CD8-positive, alpha-beta memory T cell (primary cell): ENCODE measurements at regions of chr16 and their contacts with region 1.

Region 1: GRCh38 chr16:70454222-70455034 is at the start of gene FCSK:
- DNase-seq: peak; percentile 52 to 88 (median 74)
- H3K4me3 ChIP-seq: peak within 1 kb of the TSS; percentile 99
- H3K4me3 Mint-ChIP-seq: peak within 1 kb of the TSS; percentile 86 to 96 (median 93)
- H3K27ac ChIP-seq: peak within 1 kb of the TSS; percentile 83
- H3K27ac Mint-ChIP-seq: peak within 1 kb of the TSS; percentile 78 to 93 (median 91)
- H3K4me1 ChIP-seq: peaks cover 12% of the 10 kb centered on the region
- H3K4me1 Mint-ChIP-seq: peaks cover 15 to 34% (median 25%) of the 10 kb centered on the region in 3 donors
- H3K27me3 ChIP-seq: no peaks in the 10 kb centered on the region
- H3K27me3 Mint-ChIP-seq: no peaks in the 10 kb centered on the region
- total RNA-seq, gene FCSK: 15.1 to 16.9 TPM

Region 2: DNA sequence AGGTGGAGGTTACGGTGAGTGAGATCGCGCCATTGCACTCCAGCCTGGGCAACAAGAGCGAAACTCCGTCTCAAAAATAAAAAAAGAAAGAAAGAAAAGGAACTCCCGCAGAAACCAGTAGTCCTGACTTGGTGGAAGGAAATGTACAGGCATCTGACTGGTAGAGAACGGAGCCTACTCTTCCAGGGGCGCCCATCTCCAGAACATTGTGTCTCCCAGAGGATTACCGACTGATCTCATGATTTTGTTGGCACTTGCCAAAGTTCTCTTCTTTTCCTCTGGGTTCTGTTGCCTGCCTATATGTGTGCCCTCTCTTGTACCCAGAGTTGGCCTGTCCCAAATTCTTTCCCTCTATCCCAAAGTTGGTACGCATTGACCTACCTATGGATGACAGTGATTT is 83.5 kb before region 1 on chr16:
- CTCF ChIA-PET with region 1: interaction called, 10 read pairs
- POLR2A ChIA-PET with region 1: interaction called, 4 read pairs
- DNase-seq: no peak
- H3K4me3 ChIP-seq: no peak overlapping the region
- H3K4me3 Mint-ChIP-seq: no peak overlapping the region
- H3K27ac ChIP-seq: no peak overlapping the region
- H3K27ac Mint-ChIP-seq: peak overlapping the region in 4 of 8 donors; percentile 29 to 77 (median 51)
- H3K4me1 ChIP-seq: peaks cover 5% of the 10 kb centered on the region
- H3K4me1 Mint-ChIP-seq: peaks cover 5 to 10% (median 5%) of the 10 kb centered on the region in 3 donors
- H3K27me3 ChIP-seq: no peaks in the 10 kb centered on the region
- H3K27me3 Mint-ChIP-seq: no peaks in the 10 kb centered on the region